BJ (cell line): ENCODE measurements at regions of chr5 and their contacts with region 1.

Region 1: DNA sequence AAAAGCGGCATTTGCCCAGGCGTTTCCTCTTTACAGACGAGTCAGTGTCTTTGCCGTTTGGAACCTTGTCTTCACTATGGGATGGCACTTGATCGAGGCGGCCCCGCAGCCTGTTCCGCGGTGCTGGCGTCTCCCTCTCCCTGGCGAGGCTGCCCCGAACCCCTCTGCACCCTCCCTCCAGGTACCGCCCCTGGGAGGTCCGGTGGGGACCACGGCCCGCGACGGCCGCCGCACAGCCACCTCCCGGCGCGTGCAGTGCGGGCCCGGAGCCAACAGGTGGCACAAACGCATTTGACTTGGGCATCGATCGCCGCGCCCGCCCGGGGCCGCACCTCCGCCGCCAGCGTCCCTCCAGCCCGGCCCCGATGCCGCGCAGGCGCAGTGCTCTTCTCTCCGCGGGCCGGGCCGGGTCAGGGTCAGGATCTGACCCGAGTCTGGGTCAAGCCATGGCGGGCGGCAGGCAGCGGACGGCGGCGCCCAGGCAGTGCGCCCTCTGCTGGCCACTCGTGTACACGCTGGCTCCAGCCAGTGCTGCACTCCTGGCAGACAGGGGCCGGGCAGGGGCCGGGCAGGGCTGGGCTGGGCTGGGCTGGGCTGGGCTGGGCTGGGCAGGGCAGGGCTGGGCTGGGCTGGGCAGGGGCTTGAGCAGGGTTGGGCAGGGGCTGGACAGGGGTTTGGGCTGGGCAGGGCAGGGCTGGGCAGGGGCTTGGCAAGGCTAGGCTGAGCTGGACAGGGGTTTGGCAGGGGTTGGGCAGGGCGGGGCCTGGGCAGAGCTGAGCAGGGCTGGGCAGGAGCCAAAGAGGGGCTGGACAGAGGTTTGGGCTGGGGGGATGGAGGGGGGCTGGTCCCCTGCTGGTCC is 155.8 kb upstream of the IRX4 start:
- DNase-seq: no peak
- H3K4me3 ChIP-seq: peak overlapping the region; percentile 21
- H3K27me3 ChIP-seq: no peaks in the 10 kb centered on the region
- CTCF ChIP-seq: peak; percentile 69

Region 2: GRCh38 chr5:1763548-1763911 is 275.0 kb before region 1 on chr5:
- CTCF ChIA-PET with region 1: interaction called, 47 read pairs
- POLR2A ChIA-PET with region 1: interaction called, 5 read pairs
- DNase-seq: peak; percentile 15
- H3K4me3 ChIP-seq: peak overlapping the region; percentile 7; the same call in 1 of the 2 replicates
- H3K27me3 ChIP-seq: peaks cover 5% of the 10 kb centered on the region
- CTCF ChIP-seq: peak; percentile 93

Region 3: GRCh38 chr5:2052687-2053086 is 14.1 kb after region 1 on chr5:
- CTCF ChIA-PET with region 1: no interaction called
- POLR2A ChIA-PET with region 1: no interaction called
- DNase-seq: no peak
- H3K4me3 ChIP-seq: no peak overlapping the region
- H3K27me3 ChIP-seq: no peaks in the 10 kb centered on the region
- CTCF ChIP-seq: no peak

Region 4: GRCh38 chr5:2453781-2454180 is 415.2 kb after region 1 on chr5:
- CTCF ChIA-PET with region 1: no interaction called
- POLR2A ChIA-PET with region 1: no interaction called
- DNase-seq: no peak
- H3K4me3 ChIP-seq: no peak overlapping the region
- H3K27me3 ChIP-seq: no peaks in the 10 kb centered on the region
- CTCF ChIP-seq: no peak